ENCODE measurements at regions of chrX and their contacts with region 1.

Region 1: GRCh38 chrX:103214870-103215424 is at the start of gene BEX4:
- DNase-seq: peak; percentile 6
- ATAC-seq: peak; percentile 80
- H3K4me3 ChIP-seq: 0 out of 4 replicates have a peak within 1 kb of the TSS, but pooled peaks have one; percentile 7 to 13
- H3K27ac ChIP-seq: no peak within 1 kb of the TSS
- H3K4me1 ChIP-seq: peaks cover 0 to 4% of the 10 kb centered on the region in 2 experiments; a peak in 1 of 4 replicates
- H3K27me3 ChIP-seq: no peaks in the 10 kb centered on the region
- CTCF ChIP-seq: no peak
- POLR2A ChIP-seq: no peak
- RAD21 ChIP-seq: no peak
- total RNA-seq, gene BEX4: 0.91 TPM

Region 2: GRCh38 chrX:103248553-103248952 is 33.6 kb after region 1 on chrX:
- CTCF ChIA-PET with region 1: interaction called, 7 read pairs
- POLR2A ChIA-PET with region 1: no interaction called
- RAD21 ChIA-PET with region 1: no interaction called
- intact Hi-C with region 1: loop called (anchors 5 kb)
- DNase-seq: peak; percentile 8
- ATAC-seq: peak; percentile 58; the same call in 1 of the 2 replicates
- H3K4me3 ChIP-seq: no peak overlapping the region
- H3K27ac ChIP-seq: no peak overlapping the region
- H3K4me1 ChIP-seq: peaks cover 3 to 5% of the 10 kb centered on the region in 2 experiments; a peak in 1 of 4 replicates
- H3K27me3 ChIP-seq: no peaks in the 10 kb centered on the region
- CTCF ChIP-seq: peak in 2 of 3 experiments; percentile 27 to 40; a peak in 2 of 6 replicates
- POLR2A ChIP-seq: no peak
- RAD21 ChIP-seq: peak; percentile 48

Region 3: GRCh38 chrX:103464774-103465117 is 249.8 kb after region 1 on chrX:
- CTCF ChIA-PET with region 1: interaction called, 21 read pairs
- POLR2A ChIA-PET with region 1: no interaction called
- RAD21 ChIA-PET with region 1: interaction called in 1 of 2 experiments, 3 read pairs
- intact Hi-C with region 1: loop called (anchors 1 kb)
- DNase-seq: peak; percentile 21
- ATAC-seq: peak; percentile 91
- H3K4me3 ChIP-seq: no peak overlapping the region
- H3K27ac ChIP-seq: no peak overlapping the region
- H3K4me1 ChIP-seq: no peaks in the 10 kb centered on the region
- H3K27me3 ChIP-seq: no peaks in the 10 kb centered on the region
- CTCF ChIP-seq: peak; percentile 59 to 71 (median 67); a peak in 5 of 6 replicates
- POLR2A ChIP-seq: no peak
- RAD21 ChIP-seq: peak; percentile 74

Measured in HCT116 (cell line).